Activated T-helper 2 cell treated with anti-CD3 and anti-CD28 coated beads, Interferon-gamma antibody, Interleukin-2, Interleukin-4, amounts not matched to agents 10 μg/mL and 5 μg/mL and 100 μg/mL, durations not matched to agents 14 hours and 24 hours and 36 hours (primary cell): ENCODE measurements at regions of chr3 and their contacts with region 1.

Region 1: DNA sequence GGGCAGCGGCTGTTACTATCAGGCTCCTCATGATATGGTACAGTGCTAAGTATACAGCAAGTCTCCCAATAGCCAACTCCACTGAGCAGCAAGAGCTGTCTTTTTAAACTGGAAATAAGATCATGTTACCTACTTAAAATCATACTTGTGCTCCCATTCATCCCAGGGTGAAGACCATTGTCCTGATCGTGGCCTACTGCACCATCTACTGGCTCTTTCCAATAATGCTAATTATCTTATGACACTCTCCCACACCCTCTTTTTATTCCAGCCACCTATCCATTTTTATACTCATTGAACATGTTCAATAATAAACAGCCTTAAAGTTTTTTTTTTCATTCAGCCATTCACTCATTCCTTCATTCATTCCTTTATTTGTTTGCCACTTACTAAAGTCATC is 117.7 kb downstream of the GBE1 start:
- DNase-seq: no peak
- H3K4me3 Mint-ChIP-seq: no peak overlapping the region
- H3K27ac Mint-ChIP-seq: no peak overlapping the region
- H3K4me1 Mint-ChIP-seq: no peaks in the 10 kb centered on the region
- H3K27me3 Mint-ChIP-seq: no peaks in the 10 kb centered on the region

Region 2: GRCh38 chr3:81490541-81491288 is 153.0 kb before region 1 on chr3:
- intact Hi-C with region 1: loop called (anchors 10 kb)
- DNase-seq: peak; percentile 51
- H3K4me3 Mint-ChIP-seq: no peak overlapping the region
- H3K27ac Mint-ChIP-seq: no peak overlapping the region
- H3K4me1 Mint-ChIP-seq: no peaks in the 10 kb centered on the region
- H3K27me3 Mint-ChIP-seq: no peaks in the 10 kb centered on the region

Region 3: GRCh38 chr3:81581966-81582599 is 61.6 kb before region 1 on chr3:
- intact Hi-C with region 1: loop called (anchors 10 kb)
- DNase-seq: no peak
- H3K4me3 Mint-ChIP-seq: no peak overlapping the region
- H3K27ac Mint-ChIP-seq: no peak overlapping the region
- H3K4me1 Mint-ChIP-seq: peaks cover 1% of the 10 kb centered on the region
- H3K27me3 Mint-ChIP-seq: no peaks in the 10 kb centered on the region

Region 4: DNA sequence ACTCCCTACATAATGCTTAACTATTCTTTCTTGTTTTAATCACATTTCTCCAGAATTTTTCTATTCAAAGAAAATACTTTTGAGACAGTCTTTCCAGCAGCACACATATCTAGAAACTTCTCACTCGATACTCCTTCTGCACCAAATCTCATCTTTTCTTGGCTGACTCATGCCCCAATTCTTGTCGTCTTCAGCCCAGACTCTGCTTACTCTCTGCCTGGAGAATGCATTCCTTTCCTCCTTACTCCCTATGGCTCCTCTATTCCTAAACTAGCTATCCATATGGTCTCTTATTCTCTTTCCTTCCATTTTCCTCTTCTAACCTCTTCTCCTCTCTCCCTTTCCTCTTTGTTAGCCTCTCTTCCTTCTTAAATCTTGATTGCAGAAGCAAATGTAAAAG is 40.9 kb before region 1 on chr3:
- intact Hi-C with region 1: no loop called
- DNase-seq: no peak
- H3K4me3 Mint-ChIP-seq: no peak overlapping the region
- H3K27ac Mint-ChIP-seq: no peak overlapping the region
- H3K4me1 Mint-ChIP-seq: peaks cover 3% of the 10 kb centered on the region
- H3K27me3 Mint-ChIP-seq: no peaks in the 10 kb centered on the region

Region 5: GRCh38 chr3:81749265-81749664 is 105.5 kb after region 1 on chr3:
- intact Hi-C with region 1: no loop called
- DNase-seq: no peak
- H3K4me3 Mint-ChIP-seq: no peak overlapping the region
- H3K27ac Mint-ChIP-seq: no peak overlapping the region
- H3K4me1 Mint-ChIP-seq: peaks cover 8% of the 10 kb centered on the region
- H3K27me3 Mint-ChIP-seq: no peaks in the 10 kb centered on the region